ENCODE measurements at regions of chr2 and their contacts with region 1.

Region 1: GRCh38 chr2:201860636-201861066 is 54.3 kb downstream of the CDK15 start:
- DNase-seq: peak; percentile 39 to 67 (median 53)
- ATAC-seq: peak; percentile 86
- H3K4me3 ChIP-seq: no peak overlapping the region
- H3K27ac ChIP-seq: no peak overlapping the region
- H3K4me1 ChIP-seq: no peaks in the 10 kb centered on the region
- H3K27me3 ChIP-seq: no peaks in the 10 kb centered on the region
- CTCF ChIP-seq: peak; percentile 64 to 84 (median 76)
- POLR2A ChIP-seq: no peak

Region 2: DNA sequence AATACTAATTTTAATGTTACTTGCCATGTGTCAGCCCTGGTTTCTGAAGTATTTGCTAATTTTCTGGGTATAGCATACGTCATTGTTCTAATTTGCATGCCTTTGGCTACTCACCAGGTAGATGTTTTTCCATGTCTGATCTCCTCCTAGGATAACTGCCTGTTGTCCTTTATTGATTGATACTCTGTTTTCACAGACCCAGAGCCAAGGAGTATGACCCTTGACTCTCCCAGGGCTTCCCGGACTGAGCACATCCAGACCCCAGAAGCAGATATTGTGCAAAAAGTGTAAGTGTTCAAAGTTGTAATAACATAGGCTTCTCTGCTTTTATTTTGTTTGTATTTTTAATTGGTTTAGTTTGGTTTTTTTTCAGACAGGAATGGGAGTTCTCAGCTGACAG is 323.9 kb after region 1 on chr2:
- intact Hi-C with region 1: loop called (anchors 5 kb)
- DNase-seq: no peak
- ATAC-seq: no peak
- H3K4me3 ChIP-seq: no peak overlapping the region
- H3K27ac ChIP-seq: no peak overlapping the region
- H3K4me1 ChIP-seq: peaks cover 4% of the 10 kb centered on the region
- H3K27me3 ChIP-seq: no peaks in the 10 kb centered on the region
- CTCF ChIP-seq: no peak
- POLR2A ChIP-seq: no peak